ENCODE measurements at regions of chr14 and their contacts with region 1.

Region 1: DNA sequence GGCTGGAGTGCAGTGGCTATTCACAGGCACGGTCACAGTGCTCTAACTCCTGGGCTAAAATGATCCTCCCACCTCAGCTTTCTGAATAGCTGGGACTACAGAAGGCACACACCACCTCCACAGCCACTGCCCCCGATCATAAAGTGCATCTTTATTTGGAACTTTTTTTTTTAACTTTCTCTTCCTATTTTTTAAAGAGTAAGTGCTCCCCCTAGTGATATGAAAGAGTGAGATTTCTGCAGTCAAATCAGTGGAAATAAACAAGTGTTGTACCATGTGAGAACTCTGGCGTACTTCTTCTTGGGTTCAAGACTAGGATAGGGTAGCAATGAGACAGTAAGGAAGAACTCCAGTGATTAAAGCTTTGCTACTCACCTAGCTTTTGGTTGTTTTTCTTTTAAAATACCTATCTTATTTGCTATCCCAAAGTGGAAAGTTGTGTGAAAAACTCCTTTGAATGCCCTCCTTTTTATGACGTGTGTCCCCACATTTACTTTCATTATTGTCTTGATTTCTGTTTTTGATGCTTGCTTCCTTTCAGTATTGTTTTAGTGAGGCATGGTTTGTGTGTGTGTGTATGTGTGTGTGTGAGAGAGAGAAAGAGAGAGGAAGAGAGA is 6.6 kb downstream of the PPP4R4 start:
- DNase-seq: peak; percentile 58
- ATAC-seq: no peak
- H3K4me3 ChIP-seq: no peak overlapping the region
- H3K27ac ChIP-seq: no peak overlapping the region
- H3K4me1 ChIP-seq: no peaks in the 10 kb centered on the region
- H3K27me3 ChIP-seq: peaks cover 39% of the 10 kb centered on the region
- CTCF ChIP-seq: peak; percentile 73

Region 2: GRCh38 chr14:93655078-93655750 is 525.5 kb before region 1 on chr14:
- CTCF ChIA-PET with region 1: no interaction called
- POLR2A ChIA-PET with region 1: no interaction called
- intact Hi-C with region 1: loop called (anchors 5 kb)
- DNase-seq: peak; percentile 85
- ATAC-seq: peak; percentile 40; the same call in 1 of the 2 replicates
- H3K4me3 ChIP-seq: no peak overlapping the region
- H3K27ac ChIP-seq: no peak overlapping the region
- H3K4me1 ChIP-seq: no peaks in the 10 kb centered on the region
- H3K27me3 ChIP-seq: peaks cover 33% of the 10 kb centered on the region
- CTCF ChIP-seq: peak; percentile 69